ENCODE measurements at regions of chr10 and their contacts with region 1.

Region 1: GRCh38 chr10:8053446-8054290 is 820 bp upstream of the GATA3 start:
- DNase-seq: peak; percentile 52
- ATAC-seq: peak; percentile 79
- H3K4me3 Mint-ChIP-seq: peak overlapping the region; percentile 79
- H3K27ac Mint-ChIP-seq: peak overlapping the region; percentile 18
- H3K4me1 Mint-ChIP-seq: peaks cover 49% of the 10 kb centered on the region
- H3K27me3 Mint-ChIP-seq: peaks cover 41% of the 10 kb centered on the region
- CTCF ChIP-seq: no peak

Region 2: DNA sequence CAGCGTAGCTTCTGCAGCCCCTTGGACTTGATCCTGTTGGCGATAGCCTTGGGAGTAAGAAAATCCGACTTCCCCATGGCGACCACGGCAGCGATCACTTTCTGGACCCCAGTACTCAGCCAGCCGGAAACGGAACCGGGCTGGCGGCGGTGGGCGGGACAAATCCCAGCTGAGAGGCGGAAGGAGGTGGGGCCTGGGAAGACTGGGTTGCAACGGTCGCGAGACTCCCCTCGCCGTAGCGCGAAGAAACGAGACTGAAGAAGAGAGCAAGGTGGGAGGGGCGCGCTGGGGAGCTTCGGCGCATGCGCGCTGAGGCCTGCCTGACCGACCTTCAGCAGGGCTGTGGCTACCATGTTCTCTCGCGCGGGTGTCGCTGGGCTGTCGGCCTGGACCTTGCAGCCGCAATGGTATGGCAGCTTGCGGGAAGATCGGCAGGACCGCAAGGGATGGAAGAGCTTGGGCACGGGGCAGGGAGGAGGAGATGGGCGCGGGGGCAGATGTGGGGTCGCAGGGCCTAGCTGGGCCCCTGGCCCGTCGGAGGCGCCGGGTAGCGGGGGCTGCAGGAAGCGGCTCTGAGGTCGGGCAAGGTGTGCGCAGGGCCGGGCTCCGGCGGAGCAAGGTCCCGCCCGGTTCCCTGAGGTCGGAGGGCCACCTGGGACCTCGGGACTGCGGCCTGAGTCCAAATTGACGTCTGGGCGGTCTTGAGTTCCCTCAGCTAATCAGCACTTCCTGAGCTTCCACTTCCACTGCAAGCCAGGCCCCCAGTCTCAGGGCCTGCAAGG is 265.6 kb before region 1 on chr10 and contains the starts of genes ATP5F1C and KIN:
- CTCF ChIA-PET with region 1: no interaction called
- POLR2A ChIA-PET with region 1: no interaction called
- intact Hi-C with region 1: loop called (anchors 10 kb)
- DNase-seq: peak; percentile 93
- ATAC-seq: peak; percentile 97
- H3K4me3 Mint-ChIP-seq: no peak within 1 kb of the TSS
- H3K27ac Mint-ChIP-seq: no peak within 1 kb of the TSS
- H3K4me1 Mint-ChIP-seq: peaks cover 51% of the 10 kb centered on the region
- H3K27me3 Mint-ChIP-seq: no peaks in the 10 kb centered on the region
- CTCF ChIP-seq: no peak
- total RNA-seq, gene ATP5F1C: 177 and 182 TPM in 2 replicates
- total RNA-seq, gene KIN: 12.6 and 13.1 TPM in 2 replicates

Region 3: DNA sequence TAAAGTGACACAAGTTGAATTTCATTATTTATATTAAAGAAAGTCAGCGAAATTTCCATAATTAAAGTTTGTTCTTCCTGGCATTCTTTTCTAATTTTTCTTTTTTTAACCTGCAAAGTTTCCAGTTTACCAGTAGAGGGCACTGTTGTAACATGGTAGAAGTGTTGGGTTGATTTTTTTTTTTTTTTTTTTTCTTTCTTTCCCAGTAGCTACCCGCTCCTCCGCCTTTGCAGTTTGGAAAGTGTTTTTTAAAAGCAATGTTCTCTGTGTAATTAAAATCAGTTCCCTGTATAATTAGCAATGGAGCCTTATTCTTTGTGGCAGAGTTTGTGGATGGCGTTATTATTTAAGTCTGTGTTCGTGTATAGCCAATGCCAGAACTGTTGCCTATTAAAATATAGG is 181.6 kb before region 1 on chr10:
- CTCF ChIA-PET with region 1: no interaction called
- POLR2A ChIA-PET with region 1: no interaction called
- intact Hi-C with region 1: loop called (anchors 10 kb)
- DNase-seq: no peak
- ATAC-seq: no peak
- H3K4me3 Mint-ChIP-seq: peak overlapping the region; percentile 60
- H3K27ac Mint-ChIP-seq: no peak overlapping the region
- H3K4me1 Mint-ChIP-seq: peaks cover 10% of the 10 kb centered on the region
- H3K27me3 Mint-ChIP-seq: no peaks in the 10 kb centered on the region
- CTCF ChIP-seq: peak; percentile 85

Region 4: GRCh38 chr10:8037941-8038894 is 15.4 kb before region 1 on chr10:
- CTCF ChIA-PET with region 1: no interaction called
- POLR2A ChIA-PET with region 1: interaction called, 4 read pairs
- intact Hi-C with region 1: loop called (anchors 2 kb)
- DNase-seq: no peak
- ATAC-seq: no peak
- H3K4me3 Mint-ChIP-seq: no peak overlapping the region
- H3K27ac Mint-ChIP-seq: peak overlapping the region; percentile 27
- H3K4me1 Mint-ChIP-seq: peaks cover 27% of the 10 kb centered on the region
- H3K27me3 Mint-ChIP-seq: peaks cover 68% of the 10 kb centered on the region
- CTCF ChIP-seq: no peak

Region 5: DNA sequence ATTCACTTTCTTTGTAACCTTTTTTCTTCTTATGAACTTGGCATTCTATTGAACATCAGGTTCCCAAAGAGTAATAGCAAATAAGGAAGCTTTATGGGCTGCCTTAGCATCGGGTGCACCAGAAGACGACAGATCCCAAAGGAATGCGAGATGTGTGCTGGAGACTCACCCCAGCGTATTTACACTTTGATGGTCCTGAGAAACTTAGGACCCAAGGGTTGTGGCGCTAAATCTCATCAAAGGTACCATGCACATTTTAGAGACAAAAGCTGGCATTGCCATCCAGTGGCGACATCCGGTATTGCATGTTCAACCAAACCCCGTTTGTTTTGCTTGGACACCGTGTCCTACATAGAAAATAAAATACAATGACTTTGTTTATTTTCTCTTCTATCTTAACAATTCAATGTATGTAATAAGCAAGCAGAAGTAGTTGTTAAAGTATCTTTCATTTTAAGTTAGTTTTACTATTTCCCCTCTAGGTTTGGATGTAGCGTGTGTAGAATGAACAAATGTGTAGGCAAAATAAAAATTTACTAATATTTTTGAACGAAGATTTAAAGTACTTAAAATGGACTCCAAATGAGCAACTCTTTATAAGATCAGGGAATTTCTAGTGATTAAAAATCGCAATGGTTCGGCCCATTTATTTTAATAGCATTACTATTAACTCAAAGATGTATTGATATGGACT is 1155.6 kb after region 1 on chr10:
- CTCF ChIA-PET with region 1: no interaction called
- POLR2A ChIA-PET with region 1: no interaction called
- intact Hi-C with region 1: loop called (anchors 10 kb)
- DNase-seq: peak; percentile 42
- ATAC-seq: no peak
- H3K4me3 Mint-ChIP-seq: no peak overlapping the region
- H3K27ac Mint-ChIP-seq: no peak overlapping the region
- H3K4me1 Mint-ChIP-seq: no peaks in the 10 kb centered on the region
- H3K27me3 Mint-ChIP-seq: peaks cover 4% of the 10 kb centered on the region
- CTCF ChIP-seq: peak; percentile 62

Region 6: GRCh38 chr10:9596368-9596920 is 1542.8 kb after region 1 on chr10:
- CTCF ChIA-PET with region 1: no interaction called
- POLR2A ChIA-PET with region 1: no interaction called
- intact Hi-C with region 1: no loop called
- DNase-seq: no peak
- ATAC-seq: no peak
- H3K4me3 Mint-ChIP-seq: no peak overlapping the region
- H3K27ac Mint-ChIP-seq: no peak overlapping the region
- H3K4me1 Mint-ChIP-seq: no peaks in the 10 kb centered on the region
- H3K27me3 Mint-ChIP-seq: no peaks in the 10 kb centered on the region
- CTCF ChIP-seq: no peak

Measured in activated B cell treated with CpG ODN at 0.5 μM for 24 hours (primary cell).